Mammary epithelial cell (primary cell): ENCODE measurements at regions of chr12 and their contacts with region 1.

Region 1: GRCh38 chr12:85029456-85029855 is 6.6 kb downstream of the TSPAN19 start:
- DNase-seq: peak; percentile 14
- H3K4me3 ChIP-seq: no peak overlapping the region
- H3K27ac ChIP-seq: no peak overlapping the region
- H3K4me1 ChIP-seq: no peaks in the 10 kb centered on the region
- H3K27me3 ChIP-seq: no peaks in the 10 kb centered on the region
- CTCF ChIP-seq: peak; percentile 21 to 45

Region 2: GRCh38 chr12:84889818-84890217 is 139.6 kb before region 1 on chr12:
- CTCF ChIA-PET with region 1: no interaction called
- dilution Hi-C with region 1: no loop called
- in situ Hi-C with region 1: loop called in 1 of 2 experiments (anchors 10 kb)
- intact Hi-C with region 1: no loop called
- DNase-seq: no peak
- H3K4me3 ChIP-seq: no peak overlapping the region
- H3K27ac ChIP-seq: no peak overlapping the region
- H3K4me1 ChIP-seq: no peaks in the 10 kb centered on the region
- H3K27me3 ChIP-seq: no peaks in the 10 kb centered on the region
- CTCF ChIP-seq: no peak

Region 3: GRCh38 chr12:84912198-84913128 is 117.0 kb before region 1 on chr12 and contains the start of gene SLC6A15:
- CTCF ChIA-PET with region 1: interaction called, 4 read pairs
- dilution Hi-C with region 1: no loop called
- in situ Hi-C with region 1: no loop called
- intact Hi-C with region 1: loop called (anchors 1 kb)
- DNase-seq: peak; percentile 88
- H3K4me3 ChIP-seq: peak within 1 kb of the TSS; percentile 64 to 88 (median 77)
- H3K27ac ChIP-seq: peak within 1 kb of the TSS; percentile 85
- H3K4me1 ChIP-seq: peaks cover 7% of the 10 kb centered on the region
- H3K27me3 ChIP-seq: no peaks in the 10 kb centered on the region
- CTCF ChIP-seq: peak; percentile 43 to 74
- total RNA-seq, gene SLC6A15: 26.7 to 185 TPM

Region 4: DNA sequence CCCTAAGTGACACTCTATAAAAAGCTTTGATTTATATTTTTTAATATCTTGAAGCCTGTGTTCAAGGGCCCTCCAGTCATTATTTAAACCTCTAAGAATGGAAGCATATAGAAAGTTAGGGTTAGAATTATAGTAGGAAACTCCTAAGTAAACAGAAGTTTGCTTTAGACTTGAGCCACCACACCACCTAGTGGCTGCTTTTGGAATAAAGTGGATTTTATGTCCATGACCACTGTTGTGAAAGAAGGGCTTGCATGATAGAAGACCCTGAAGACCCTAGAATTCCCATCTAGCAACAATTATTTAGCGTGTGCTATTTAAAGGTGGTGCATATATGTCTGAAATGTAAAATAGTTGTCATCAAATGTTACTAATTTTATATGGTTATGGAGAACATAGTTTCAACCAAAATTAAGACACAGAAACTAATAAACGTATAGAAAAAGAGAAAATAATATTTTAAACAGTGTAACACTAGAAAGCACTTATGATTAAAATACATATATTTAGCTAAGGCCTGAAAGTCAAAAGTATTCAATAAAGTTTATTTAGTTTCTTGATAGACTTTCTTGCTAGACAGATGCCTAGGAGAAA is 28.0 kb after region 1 on chr12:
- CTCF ChIA-PET with region 1: no interaction called
- dilution Hi-C with region 1: no loop called
- in situ Hi-C with region 1: no loop called
- intact Hi-C with region 1: no loop called
- DNase-seq: peak; percentile 27
- H3K4me3 ChIP-seq: no peak overlapping the region
- H3K27ac ChIP-seq: no peak overlapping the region
- H3K4me1 ChIP-seq: no peaks in the 10 kb centered on the region
- H3K27me3 ChIP-seq: no peaks in the 10 kb centered on the region
- CTCF ChIP-seq: peak; percentile 66 to 81